Activated B cell treated with CpG ODN at 0.5 μM for 24 hours (primary cell): ENCODE measurements at regions of chr9 and their contacts with region 1.

Region 1: GRCh38 chr9:112333639-112334431 is 416 bp upstream of the PTBP3 start:
- DNase-seq: peak; percentile 85
- ATAC-seq: peak; percentile 87
- H3K4me3 Mint-ChIP-seq: peak overlapping the region; percentile 94
- H3K27ac Mint-ChIP-seq: peak overlapping the region; percentile 96
- H3K4me1 Mint-ChIP-seq: peaks cover 40% of the 10 kb centered on the region
- H3K27me3 Mint-ChIP-seq: no peaks in the 10 kb centered on the region
- CTCF ChIP-seq: no peak

Region 2: GRCh38 chr9:111631071-111631971 is 702.5 kb before region 1 on chr9 and contains the start of gene DNAJC25:
- CTCF ChIA-PET with region 1: no interaction called
- POLR2A ChIA-PET with region 1: no interaction called
- intact Hi-C with region 1: loop called (anchors 1 kb)
- DNase-seq: peak; percentile 91
- ATAC-seq: peak; percentile 94
- H3K4me3 Mint-ChIP-seq: peak within 1 kb of the TSS; percentile 95
- H3K27ac Mint-ChIP-seq: peak within 1 kb of the TSS; percentile 89
- H3K4me1 Mint-ChIP-seq: peaks cover 29% of the 10 kb centered on the region
- H3K27me3 Mint-ChIP-seq: no peaks in the 10 kb centered on the region
- CTCF ChIP-seq: no peak
- total RNA-seq, gene DNAJC25: 3.5 and 4.3 TPM in 2 replicates

Region 3: DNA sequence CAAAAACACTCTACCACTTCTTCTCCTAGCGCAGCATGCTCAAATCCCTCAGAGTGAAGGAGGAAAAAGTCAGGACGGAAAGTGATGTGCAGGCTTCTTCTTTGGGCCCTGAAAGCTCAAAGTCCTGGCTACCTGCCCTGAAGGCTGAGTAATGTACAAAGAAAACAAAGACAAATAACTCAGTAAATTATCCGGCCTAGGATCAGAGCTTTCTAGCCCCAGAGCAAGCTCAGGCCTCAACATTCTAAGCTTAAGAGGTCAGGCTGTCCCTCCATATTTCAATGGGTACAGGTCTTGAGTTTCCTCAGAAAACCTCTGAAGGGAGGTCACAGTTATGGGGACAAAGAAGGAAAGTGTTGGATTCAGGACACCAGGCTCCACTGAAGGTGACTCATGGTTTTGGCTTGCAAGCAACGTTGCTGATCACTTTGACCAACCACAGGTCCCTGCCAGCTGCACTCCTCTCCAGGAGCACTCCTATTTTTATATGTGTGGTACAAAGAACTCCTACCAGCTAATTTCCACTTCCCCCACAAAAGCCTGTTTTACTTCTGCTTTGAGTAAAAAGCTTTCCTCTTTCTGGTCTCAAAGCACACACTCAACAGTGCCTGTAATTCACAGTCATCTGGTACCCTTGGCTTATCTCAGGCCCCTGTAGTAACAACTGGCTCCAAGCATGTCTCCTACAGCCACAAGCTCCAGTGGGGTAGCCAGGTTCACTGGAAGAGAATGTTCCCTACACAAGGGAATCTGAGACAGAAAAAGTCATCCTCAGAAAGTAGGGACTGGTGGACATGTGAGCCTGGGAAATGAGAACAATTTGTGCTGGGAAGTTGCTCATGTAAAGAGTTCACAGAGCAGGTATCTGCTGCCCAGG is 321.6 kb before region 1 on chr9:
- CTCF ChIA-PET with region 1: no interaction called
- POLR2A ChIA-PET with region 1: no interaction called
- intact Hi-C with region 1: loop called (anchors 5 kb)
- DNase-seq: no peak
- ATAC-seq: peak; percentile 85
- H3K4me3 Mint-ChIP-seq: peak overlapping the region; percentile 47
- H3K27ac Mint-ChIP-seq: peak overlapping the region; percentile 93
- H3K4me1 Mint-ChIP-seq: peaks cover 84% of the 10 kb centered on the region
- H3K27me3 Mint-ChIP-seq: no peaks in the 10 kb centered on the region
- CTCF ChIP-seq: no peak

Region 4: DNA sequence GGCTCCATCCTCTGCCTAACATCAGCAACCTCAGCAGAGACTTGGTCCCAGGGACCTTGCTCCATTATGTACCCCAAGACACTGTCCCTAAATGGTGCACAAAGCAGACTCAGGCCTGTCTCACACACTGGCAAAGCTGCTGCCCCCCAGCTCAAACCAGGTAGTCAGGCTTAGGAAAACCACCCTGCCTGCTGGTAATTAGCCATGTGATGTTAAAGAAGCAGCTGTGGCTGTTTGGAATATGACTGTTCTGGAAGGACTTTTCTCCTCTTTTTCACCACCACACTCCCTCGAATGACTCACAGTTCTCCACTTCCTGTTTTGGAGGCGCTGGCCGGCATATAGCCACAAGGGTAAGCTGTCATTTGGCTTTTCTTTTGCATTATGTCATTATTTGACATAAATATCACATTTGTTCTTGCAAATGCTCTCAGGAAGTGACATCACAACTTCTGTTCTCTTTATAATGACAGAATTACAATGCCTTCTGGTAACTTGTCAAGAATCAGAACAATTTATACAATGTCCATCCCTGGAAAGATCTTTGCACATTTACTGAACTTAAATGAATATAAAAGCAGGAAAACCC is 272.6 kb before region 1 on chr9:
- CTCF ChIA-PET with region 1: no interaction called
- POLR2A ChIA-PET with region 1: no interaction called
- intact Hi-C with region 1: no loop called
- DNase-seq: no peak
- ATAC-seq: peak; percentile 70
- H3K4me3 Mint-ChIP-seq: no peak overlapping the region
- H3K27ac Mint-ChIP-seq: peak overlapping the region; percentile 85
- H3K4me1 Mint-ChIP-seq: peaks cover 67% of the 10 kb centered on the region
- H3K27me3 Mint-ChIP-seq: no peaks in the 10 kb centered on the region
- CTCF ChIP-seq: no peak

Region 5: GRCh38 chr9:112174218-112174964 is 159.4 kb before region 1 on chr9:
- CTCF ChIA-PET with region 1: no interaction called
- POLR2A ChIA-PET with region 1: interaction called, 6 read pairs
- intact Hi-C with region 1: loop called (anchors 2 kb)
- DNase-seq: peak; percentile 62
- ATAC-seq: peak; percentile 87
- H3K4me3 Mint-ChIP-seq: peak overlapping the region; percentile 85
- H3K27ac Mint-ChIP-seq: peak overlapping the region; percentile 63
- H3K4me1 Mint-ChIP-seq: peaks cover 39% of the 10 kb centered on the region
- H3K27me3 Mint-ChIP-seq: no peaks in the 10 kb centered on the region
- CTCF ChIP-seq: no peak

Region 6: DNA sequence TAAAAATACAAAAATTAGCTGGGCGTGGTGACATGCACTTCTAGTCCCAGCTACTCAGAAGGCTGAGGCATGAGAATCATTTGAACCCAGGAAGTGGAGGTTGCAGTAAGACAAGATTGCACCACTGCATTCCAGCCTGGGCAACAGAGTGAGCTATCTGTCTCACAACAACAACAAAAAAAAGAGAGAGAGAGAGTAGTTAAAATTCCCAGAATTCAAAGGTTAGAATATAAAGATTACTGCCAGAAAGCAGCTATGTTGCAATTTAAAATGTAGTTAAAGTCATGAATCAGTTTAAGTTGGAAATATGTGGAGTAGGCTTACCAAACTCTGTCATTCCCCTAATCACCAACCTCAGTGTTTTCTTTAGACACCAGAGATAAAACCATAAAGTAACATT is 100.1 kb before region 1 on chr9:
- CTCF ChIA-PET with region 1: no interaction called
- POLR2A ChIA-PET with region 1: no interaction called
- intact Hi-C with region 1: no loop called
- DNase-seq: no peak
- ATAC-seq: no peak
- H3K4me3 Mint-ChIP-seq: no peak overlapping the region
- H3K27ac Mint-ChIP-seq: no peak overlapping the region
- H3K4me1 Mint-ChIP-seq: peaks cover 5% of the 10 kb centered on the region
- H3K27me3 Mint-ChIP-seq: no peaks in the 10 kb centered on the region
- CTCF ChIP-seq: no peak

Region 7: DNA sequence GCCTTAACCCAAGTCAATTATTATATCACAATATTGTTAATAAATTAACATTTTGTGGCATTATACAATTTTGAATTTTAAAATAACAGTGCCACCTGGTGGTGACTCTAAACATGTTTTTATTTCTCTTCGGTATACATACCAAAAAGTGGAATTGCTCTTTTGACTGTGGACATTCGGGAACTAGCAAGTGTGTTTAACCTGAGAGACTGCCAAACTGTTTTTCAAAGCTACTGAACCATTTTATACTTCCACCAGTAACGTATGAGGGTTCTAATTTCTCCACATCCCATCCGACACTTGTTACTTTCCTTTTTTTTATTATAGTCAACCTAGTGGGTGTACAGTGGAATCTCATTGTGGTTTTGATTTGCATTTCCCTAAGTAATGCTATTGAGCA is 27.8 kb after region 1 on chr9:
- CTCF ChIA-PET with region 1: no interaction called
- POLR2A ChIA-PET with region 1: no interaction called
- intact Hi-C with region 1: loop called (anchors 1 kb)
- DNase-seq: no peak
- ATAC-seq: peak; percentile 40
- H3K4me3 Mint-ChIP-seq: peak overlapping the region; percentile 41
- H3K27ac Mint-ChIP-seq: no peak overlapping the region
- H3K4me1 Mint-ChIP-seq: peaks cover 2% of the 10 kb centered on the region
- H3K27me3 Mint-ChIP-seq: no peaks in the 10 kb centered on the region
- CTCF ChIP-seq: peak; percentile 59

Region 8: DNA sequence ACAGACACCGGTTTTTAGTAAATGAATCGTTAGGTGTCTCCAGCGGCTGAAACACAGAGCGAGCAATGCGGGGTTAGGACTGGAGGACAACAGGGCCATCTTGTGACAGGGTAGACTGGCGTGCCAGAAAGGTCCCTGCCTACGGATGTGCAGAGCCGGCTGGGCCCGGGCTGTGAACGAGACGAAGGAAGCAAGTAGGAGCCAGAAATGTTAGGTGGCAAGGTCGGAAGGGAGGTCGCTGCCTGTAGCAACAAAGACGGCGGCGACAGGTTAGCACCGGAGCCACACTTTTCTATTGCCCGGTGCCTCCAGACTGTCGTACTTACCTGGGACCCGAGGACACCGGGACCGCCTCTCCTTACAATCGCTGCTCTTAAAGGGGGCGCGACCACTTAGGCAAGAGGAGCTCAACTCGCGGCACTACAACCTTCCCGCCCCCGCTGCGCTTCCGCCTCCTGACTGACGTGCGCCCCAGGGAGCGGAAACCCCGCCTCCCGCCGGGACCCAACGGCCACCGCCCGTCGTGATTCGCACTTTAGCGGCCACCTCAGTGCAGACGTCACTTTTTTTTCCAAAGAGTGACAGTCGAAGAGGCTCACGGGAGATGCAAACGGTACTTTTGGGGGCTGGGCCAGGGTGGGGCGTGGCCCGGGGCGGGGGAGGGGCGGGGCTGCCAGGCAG is 384.0 kb after region 1 on chr9 and contains the start of gene INIP:
- CTCF ChIA-PET with region 1: no interaction called
- POLR2A ChIA-PET with region 1: interaction called, 3 read pairs
- intact Hi-C with region 1: loop called (anchors 1 kb)
- DNase-seq: peak; percentile 95
- ATAC-seq: peak; percentile 93
- H3K4me3 Mint-ChIP-seq: peak within 1 kb of the TSS; percentile 100
- H3K27ac Mint-ChIP-seq: peak within 1 kb of the TSS; percentile 98
- H3K4me1 Mint-ChIP-seq: peaks cover 19% of the 10 kb centered on the region
- H3K27me3 Mint-ChIP-seq: no peaks in the 10 kb centered on the region
- CTCF ChIP-seq: no peak
- total RNA-seq, gene INIP: 31.1 and 32.1 TPM in 2 replicates